GM10248 (cell line): ENCODE measurements at regions of chr5 and their contacts with region 1.

Region 1: GRCh38 chr5:43555895-43556606 is 826 bp downstream of the PAIP1 start:
- DNase-seq: peak; percentile 41
- CTCF ChIP-seq: no peak

Region 2: DNA sequence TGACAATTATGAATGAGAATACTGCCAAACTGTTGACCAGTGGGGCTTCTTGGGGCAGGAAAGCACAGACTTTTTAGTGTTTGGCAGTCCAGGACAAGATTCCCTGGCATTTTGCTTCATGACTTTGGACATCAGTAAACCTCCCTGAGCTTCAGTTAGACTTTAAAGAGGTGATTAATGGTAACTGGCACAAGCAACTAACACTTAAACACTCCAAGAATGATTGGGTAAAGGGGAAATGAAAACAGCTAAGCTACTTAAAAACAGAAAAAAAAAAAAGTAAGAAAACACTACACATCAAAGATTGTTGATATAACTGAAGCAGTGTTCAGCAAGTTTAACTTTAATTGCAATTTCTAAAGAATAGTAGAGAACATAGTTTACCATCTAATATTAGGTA is 12.6 kb before region 1 on chr5:
- CTCF ChIA-PET with region 1: interaction called, 23 read pairs
- POLR2A ChIA-PET with region 1: no interaction called
- DNase-seq: no peak
- CTCF ChIP-seq: no peak